ENCODE measurements at regions of chr10 and their contacts with region 1.

Region 1: DNA sequence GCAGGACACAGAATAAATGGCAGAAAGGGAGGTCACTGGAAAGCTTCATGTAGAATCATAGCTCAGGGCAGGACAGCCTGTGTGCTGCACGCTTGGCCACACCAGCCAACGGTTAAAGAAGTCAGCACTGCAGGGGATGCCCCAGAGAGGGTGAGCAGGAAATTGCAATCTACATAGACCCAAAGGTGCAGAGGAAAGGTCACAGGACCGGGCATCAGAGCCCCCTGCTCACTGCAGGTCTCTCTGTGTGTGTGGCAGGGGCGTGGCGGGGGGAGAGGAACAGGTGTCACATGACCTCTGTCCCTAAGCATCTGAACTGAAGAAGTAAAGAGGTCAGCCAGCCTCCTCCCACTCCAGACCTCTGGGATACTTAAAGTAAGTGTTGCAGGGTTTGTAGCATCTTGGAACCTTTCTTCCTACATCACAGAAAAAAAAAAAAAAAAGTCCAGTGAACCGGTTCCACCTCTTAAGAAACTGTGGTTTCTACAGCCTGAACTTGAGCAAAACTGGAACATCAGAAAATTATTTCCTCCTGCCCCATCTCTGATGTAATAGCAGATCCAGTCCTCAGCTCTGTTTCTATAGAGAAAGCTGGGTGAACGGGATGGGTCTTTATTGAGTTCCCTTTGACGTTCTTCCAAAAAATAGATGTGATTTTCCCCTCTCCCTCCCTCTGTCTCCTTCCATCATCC is 64.3 kb downstream of the RGS10 start:
- DNase-seq: peak; percentile 66
- ATAC-seq: peak; percentile 89
- H3K4me3 Mint-ChIP-seq: peak overlapping the region; percentile 17
- H3K27ac Mint-ChIP-seq: peak overlapping the region; percentile 8
- H3K4me1 Mint-ChIP-seq: peaks cover 28% of the 10 kb centered on the region
- H3K27me3 Mint-ChIP-seq: peaks cover 3% of the 10 kb centered on the region

Region 2: DNA sequence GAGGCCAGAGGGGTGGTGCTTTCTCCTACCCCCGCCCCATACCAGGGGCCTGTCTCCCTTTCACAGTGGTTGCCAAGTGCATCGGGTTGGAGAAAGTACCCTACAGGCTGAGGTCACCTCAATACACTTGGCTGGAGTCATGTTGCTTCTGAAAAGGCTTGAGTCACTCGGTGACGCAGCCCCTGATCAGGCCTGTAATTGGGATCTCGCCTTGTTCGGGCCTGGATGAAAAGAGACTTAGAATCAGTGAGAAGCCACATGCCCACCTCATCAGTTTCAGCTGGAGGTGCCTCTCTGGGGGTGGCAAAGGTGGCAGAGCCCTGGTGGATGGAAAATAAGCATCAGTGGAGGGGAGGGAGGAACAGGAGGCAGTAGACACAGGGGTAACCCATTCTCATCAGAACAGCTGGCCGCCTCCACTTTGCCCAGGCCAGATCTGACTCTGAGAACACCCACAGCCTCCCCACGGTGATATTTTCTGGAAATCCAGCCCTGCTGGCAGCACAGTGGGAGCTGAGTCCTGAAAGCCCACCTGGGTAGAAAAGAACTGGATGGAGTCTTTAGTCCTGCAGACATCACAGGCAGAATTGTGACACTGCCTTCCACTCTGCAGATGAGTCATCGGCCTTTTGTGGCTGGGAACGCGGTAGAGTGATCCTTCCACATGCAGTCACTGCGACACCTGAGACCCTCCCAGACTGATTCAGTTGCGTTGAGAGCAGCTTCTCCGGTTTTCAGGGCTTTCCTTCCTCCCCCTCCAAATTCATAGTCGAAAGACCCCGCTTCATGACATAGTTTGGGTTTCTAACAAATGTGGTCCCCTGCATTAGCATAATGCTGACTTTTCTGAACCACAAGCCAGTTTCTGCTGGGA is 162.9 kb before region 1 on chr10:
- CTCF ChIA-PET with region 1: no interaction called
- DNase-seq: peak; percentile 90
- ATAC-seq: peak; percentile 80
- H3K4me3 Mint-ChIP-seq: no peak overlapping the region
- H3K27ac Mint-ChIP-seq: peak overlapping the region; percentile 75
- H3K4me1 Mint-ChIP-seq: peaks cover 62% of the 10 kb centered on the region
- H3K27me3 Mint-ChIP-seq: peaks cover 21% of the 10 kb centered on the region

Region 3: GRCh38 chr10:119489991-119490326 is 11.7 kb after region 1 on chr10:
- CTCF ChIA-PET with region 1: interaction called, 29 read pairs
- DNase-seq: no peak
- ATAC-seq: no peak
- H3K4me3 Mint-ChIP-seq: peak overlapping the region; percentile 13
- H3K27ac Mint-ChIP-seq: peak overlapping the region; percentile 92
- H3K4me1 Mint-ChIP-seq: peaks cover 46% of the 10 kb centered on the region
- H3K27me3 Mint-ChIP-seq: no peaks in the 10 kb centered on the region